Activated T-helper 2 cell treated with anti-CD3 and anti-CD28 coated beads, Interferon-gamma antibody, Interleukin-2, Interleukin-4, amounts not matched to agents 10 μg/mL and 5 μg/mL and 100 μg/mL, durations not matched to agents 14 hours and 24 hours and 36 hours (primary cell): ENCODE measurements at regions of chr9 and their contacts with region 1.

Region 1: GRCh38 chr9:84697509-84698114 is 28.1 kb downstream of the NTRK2 start:
- DNase-seq: no peak
- H3K4me3 Mint-ChIP-seq: no peak overlapping the region
- H3K27ac Mint-ChIP-seq: no peak overlapping the region
- H3K4me1 Mint-ChIP-seq: peaks cover 3% of the 10 kb centered on the region
- H3K27me3 Mint-ChIP-seq: peaks cover 3% of the 10 kb centered on the region

Region 2: GRCh38 chr9:84642553-84643141 is 55.0 kb before region 1 on chr9:
- intact Hi-C with region 1: no loop called
- DNase-seq: no peak
- H3K4me3 Mint-ChIP-seq: no peak overlapping the region
- H3K27ac Mint-ChIP-seq: no peak overlapping the region
- H3K4me1 Mint-ChIP-seq: no peaks in the 10 kb centered on the region
- H3K27me3 Mint-ChIP-seq: no peaks in the 10 kb centered on the region

Region 3: GRCh38 chr9:84781458-84781857 is 83.8 kb after region 1 on chr9:
- intact Hi-C with region 1: loop called (anchors 5 kb)
- DNase-seq: no peak
- H3K4me3 Mint-ChIP-seq: no peak overlapping the region
- H3K27ac Mint-ChIP-seq: no peak overlapping the region
- H3K4me1 Mint-ChIP-seq: no peaks in the 10 kb centered on the region
- H3K27me3 Mint-ChIP-seq: peaks cover 6% of the 10 kb centered on the region

Region 4: DNA sequence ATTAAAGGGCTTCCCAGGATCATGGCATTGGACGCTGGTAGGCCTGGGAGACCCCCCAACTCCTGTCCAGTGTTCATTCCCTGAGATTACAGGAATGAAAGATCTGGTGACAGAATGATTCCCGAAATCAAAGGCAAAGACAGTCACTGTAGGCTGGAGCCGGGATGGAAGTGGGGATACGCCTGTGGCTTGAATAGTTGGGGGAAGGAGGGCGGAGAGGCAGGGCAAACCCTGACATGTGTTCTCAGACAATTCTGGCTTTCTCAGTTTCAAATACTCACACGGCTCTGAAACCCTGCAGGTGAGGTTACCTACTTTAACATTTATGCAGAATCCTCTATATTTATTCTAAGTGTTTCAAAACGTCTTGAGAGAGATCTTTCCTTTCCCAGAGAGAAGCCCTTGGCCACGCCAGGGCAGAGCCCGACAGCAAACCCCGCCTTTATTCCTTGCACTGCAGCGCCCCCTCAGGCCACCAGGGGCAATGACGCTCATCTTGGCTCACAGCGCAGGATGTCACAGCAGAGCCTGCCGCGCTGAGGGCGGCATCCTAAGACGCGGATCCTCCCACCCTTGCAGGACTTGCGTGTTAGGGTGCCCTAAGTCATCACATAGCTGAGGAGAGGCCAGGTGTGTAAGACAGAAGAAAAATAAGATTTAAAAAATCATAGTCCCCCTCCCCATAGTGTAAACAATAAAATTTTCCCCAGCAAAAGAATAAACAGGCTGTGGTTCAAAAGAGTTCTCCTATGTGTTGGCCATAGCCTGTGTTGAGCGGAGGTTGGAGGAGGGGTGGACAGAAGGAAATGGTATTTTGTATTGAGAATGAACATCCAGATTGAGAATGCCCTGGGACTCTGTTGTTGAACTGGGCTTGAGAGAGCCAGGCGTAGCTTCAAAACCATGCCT is 256.4 kb after region 1 on chr9:
- intact Hi-C with region 1: loop called (anchors 10 kb)
- DNase-seq: peak; percentile 47
- H3K4me3 Mint-ChIP-seq: no peak overlapping the region
- H3K27ac Mint-ChIP-seq: no peak overlapping the region
- H3K4me1 Mint-ChIP-seq: no peaks in the 10 kb centered on the region
- H3K27me3 Mint-ChIP-seq: peaks cover 3% of the 10 kb centered on the region